Activated naive CD8-positive, alpha-beta T cell treated with anti-CD3 and anti-CD28 coated beads, Interleukin-2, amount 10 ng/mL, durations not matched to agents 7 days and 5 days (primary cell): ENCODE measurements at regions of chr12 and their contacts with region 1.

Region 1: DNA sequence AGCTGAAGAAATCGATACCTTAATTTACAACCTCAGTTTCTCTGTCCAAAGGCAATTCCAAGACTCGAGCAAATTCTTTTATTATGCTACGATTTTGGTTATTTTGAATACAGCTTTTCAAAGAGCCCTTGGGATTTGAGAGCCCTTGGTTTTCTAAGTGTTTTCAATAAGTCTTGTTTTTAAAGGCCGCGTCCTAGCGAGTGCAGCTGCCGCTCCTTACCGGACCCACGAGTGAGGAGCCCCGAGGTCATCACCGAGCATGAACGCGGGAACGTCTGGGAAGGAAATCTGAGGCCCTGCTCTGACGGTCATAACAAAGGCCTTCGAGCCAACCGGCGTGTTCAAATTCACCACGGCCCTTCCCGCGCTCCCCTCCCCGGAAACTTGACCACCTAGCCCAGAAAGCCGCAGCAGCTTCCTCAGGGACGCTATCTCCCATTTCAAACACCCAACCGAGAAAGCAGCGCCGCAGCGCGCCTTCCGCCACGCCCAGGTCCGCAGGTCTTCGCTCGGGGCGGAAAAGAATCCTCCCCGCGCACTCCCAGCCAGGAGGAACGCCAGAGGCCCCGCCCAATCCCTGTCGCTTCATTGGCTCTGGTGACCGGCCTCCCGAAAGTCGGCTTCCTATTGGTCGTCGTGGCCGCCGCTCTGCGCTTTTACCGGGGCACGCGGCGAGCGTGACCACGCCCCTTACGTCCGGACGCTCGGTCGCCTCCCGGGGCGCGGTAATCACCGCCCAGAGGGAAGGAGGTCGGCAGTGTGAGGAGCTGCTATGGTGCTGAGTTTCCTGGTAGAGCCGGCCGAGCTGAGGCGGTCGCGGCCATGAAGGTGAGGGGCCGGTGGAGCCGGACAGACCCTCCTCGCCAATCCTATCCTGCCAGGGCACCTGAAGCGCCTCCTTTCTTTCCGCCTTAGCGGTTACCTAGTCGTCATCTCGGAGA is at the start of gene RNF34:
- DNase-seq: peak; percentile 95
- ATAC-seq: peak; percentile 91
- H3K4me3 Mint-ChIP-seq: peak within 1 kb of the TSS; percentile 95
- H3K27ac Mint-ChIP-seq: peak within 1 kb of the TSS; percentile 98
- H3K4me1 Mint-ChIP-seq: peaks cover 25% of the 10 kb centered on the region
- H3K27me3 Mint-ChIP-seq: no peaks in the 10 kb centered on the region
- total RNA-seq, gene RNF34: 81.9 to 84.5 TPM

Region 2: GRCh38 chr12:121351820-121352681 is 47.6 kb before region 1 on chr12 and contains the start of gene ANAPC5:
- POLR2A ChIA-PET with region 1: interaction called, 56 read pairs
- DNase-seq: peak; percentile 85
- ATAC-seq: peak; percentile 97
- H3K4me3 Mint-ChIP-seq: peak within 1 kb of the TSS; percentile 99
- H3K27ac Mint-ChIP-seq: peak within 1 kb of the TSS; percentile 99
- H3K4me1 Mint-ChIP-seq: peaks cover 27% of the 10 kb centered on the region
- H3K27me3 Mint-ChIP-seq: peaks cover 9% of the 10 kb centered on the region
- total RNA-seq, gene ANAPC5: 133 to 135 TPM

Region 3: GRCh38 chr12:121472150-121472905 is 72.7 kb after region 1 on chr12:
- POLR2A ChIA-PET with region 1: no interaction called
- DNase-seq: no peak
- ATAC-seq: no peak
- H3K4me3 Mint-ChIP-seq: no peak overlapping the region
- H3K27ac Mint-ChIP-seq: no peak overlapping the region
- H3K4me1 Mint-ChIP-seq: peaks cover 5% of the 10 kb centered on the region
- H3K27me3 Mint-ChIP-seq: peaks cover 2% of the 10 kb centered on the region